ENCODE measurements at regions of chr1 and their contacts with region 1.

Region 1: DNA sequence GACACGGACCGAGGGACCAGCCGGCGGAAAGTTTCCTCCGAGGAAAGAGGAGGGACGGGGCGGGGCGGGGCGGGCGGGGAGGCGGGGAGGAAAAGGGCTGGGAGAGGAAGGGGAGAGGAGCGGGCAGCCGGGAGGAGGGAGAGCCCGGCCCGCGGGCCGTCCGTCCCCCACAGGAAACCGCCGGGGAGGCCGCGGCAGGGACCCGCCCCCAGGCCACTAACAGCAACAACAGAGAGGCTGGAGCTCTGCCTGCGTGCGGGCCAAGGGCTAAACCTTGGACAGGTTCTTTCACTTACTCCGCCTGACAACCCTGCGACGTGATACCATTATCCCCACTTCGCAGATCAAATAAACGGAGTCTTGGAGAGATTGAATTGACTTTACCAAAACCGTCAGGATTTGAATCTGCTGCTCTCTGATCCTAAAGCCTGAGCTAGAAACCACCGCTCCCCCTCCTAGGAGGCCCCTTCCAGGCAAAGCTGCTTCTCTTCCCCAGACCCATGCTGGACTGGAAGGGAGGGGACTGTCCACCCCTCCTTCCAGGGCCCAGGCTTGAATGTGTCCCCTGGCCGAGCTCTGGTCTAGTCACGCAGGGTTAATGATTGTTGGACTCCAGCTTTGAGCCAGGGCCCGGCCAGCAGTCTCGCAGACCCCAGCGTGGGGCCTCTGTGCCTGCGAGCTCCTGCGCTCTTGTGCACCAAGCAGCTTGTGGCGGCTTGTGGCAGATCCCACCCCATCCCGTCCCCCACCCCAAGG is at the start of gene EVA1B:
- DNase-seq: no peak
- H3K4me3 ChIP-seq: peak within 1 kb of the TSS; percentile 78
- CTCF ChIP-seq: no peak

Region 2: DNA sequence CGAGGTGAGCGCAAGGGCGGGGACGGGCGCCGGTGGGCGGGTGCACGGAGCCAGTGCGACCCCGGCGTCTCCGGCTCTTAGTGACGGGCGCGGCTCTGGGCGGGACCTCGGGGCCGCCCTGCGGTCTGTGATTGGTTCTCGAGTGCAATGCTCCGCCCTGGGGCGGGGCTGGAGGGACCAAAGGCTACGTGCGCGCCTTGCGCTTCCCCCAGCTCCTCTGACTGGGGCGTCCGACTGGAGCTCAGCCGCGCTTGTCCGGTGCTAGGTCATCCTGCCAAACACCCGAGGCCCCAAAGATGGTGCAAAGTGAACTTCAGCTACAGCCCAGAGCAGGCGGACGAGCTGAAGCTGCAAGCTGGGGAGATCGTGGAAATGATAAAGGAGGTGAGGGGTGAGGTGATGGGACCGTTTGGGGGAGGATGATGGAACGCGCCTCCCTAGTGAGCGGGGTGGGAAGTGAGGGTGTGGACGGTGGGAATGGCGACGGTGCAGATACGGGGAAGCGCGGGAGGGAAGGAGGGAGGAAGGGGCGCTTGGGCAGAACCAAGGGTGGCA is 16.8 kb before region 1 on chr1:
- CTCF ChIA-PET with region 1: interaction called, 4 read pairs
- POLR2A ChIA-PET with region 1: interaction called, 13 read pairs
- DNase-seq: no peak
- H3K4me3 ChIP-seq: peak overlapping the region; percentile 87
- CTCF ChIP-seq: no peak

Region 3: DNA sequence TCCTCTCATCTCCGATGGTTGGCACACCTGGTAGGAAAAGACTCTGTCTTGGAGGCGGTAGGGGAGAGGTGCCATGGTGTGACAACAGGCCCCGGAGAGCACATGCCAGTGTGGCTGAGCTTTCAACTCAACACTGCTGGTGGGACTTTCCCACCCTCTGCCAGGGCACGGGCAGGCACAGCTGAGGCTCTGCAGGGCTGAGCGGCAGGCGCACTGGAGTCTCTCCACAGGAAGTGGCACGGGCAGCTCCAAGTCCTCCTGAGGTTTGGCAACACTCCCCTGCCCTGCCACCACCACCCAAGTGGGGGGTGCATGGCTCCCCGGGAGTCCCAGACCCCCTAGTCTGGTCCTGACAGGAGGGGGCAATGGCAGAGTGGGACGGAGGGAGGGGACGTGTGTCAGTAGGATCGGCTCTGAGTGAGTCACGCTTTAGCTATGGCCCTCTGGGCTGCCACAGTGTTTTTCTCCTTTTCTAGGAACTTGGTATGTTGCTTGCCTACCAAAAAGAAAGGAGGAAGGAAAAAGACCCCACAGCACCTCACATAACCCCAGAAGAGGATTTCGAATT is 27.0 kb after region 1 on chr1:
- CTCF ChIA-PET with region 1: interaction called, 4 read pairs
- POLR2A ChIA-PET with region 1: interaction called, 12 read pairs
- DNase-seq: no peak
- H3K4me3 ChIP-seq: peak overlapping the region; percentile 40
- CTCF ChIP-seq: no peak

Region 4: GRCh38 chr1:36369061-36369861 is 45.5 kb after region 1 on chr1:
- CTCF ChIA-PET with region 1: interaction called, 17 read pairs
- POLR2A ChIA-PET with region 1: interaction called, 3 read pairs
- DNase-seq: no peak
- H3K4me3 ChIP-seq: no peak overlapping the region
- CTCF ChIP-seq: peak; percentile 92

Region 5: DNA sequence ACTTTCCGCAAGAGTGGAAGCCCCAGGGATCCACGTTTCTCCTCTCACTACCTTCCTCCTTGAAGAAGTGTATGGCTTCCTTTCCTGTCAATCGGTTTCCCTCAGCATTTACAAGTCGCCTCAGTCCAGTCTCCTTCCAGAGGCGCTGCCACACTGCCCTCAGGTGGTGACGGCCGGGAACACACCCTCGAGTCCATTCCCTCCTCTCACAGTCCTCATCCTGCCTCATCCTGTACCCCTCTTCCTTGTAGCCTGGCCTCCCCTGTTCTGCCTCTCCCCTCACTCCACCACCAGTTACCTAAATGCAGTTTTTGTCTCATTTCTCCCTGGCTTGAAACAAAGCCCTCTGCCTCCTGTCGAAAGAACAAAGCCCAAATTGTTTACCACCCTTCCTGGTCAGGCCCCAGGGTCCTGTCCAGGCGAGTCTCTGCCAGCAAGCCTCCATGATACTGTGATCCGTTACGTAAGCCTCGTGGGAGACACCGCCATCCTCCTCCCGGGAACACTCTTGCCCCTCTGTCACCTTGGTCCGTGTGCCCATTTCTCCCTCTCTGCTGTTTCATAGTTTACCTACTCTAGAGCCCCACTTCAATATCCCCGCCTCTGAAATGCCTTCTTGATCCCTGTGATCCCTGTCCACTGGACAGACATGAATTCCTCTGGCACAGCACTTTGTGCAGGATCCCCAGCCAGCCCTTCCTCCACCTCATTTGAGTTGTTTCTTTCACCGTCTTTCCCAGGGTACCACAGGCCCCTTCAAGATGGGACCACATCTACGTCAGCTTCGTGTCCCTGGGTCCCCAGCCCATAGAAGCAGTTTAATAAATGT is 97.3 kb after region 1 on chr1:
- CTCF ChIA-PET with region 1: interaction called, 15 read pairs
- POLR2A ChIA-PET with region 1: no interaction called
- DNase-seq: peak; percentile 26
- H3K4me3 ChIP-seq: no peak overlapping the region
- CTCF ChIP-seq: peak; percentile 99

Measured in AG04449 (cell line).